Psoas muscle (tissue), 8 donors: ENCODE measurements at regions of chr11 and their contacts with region 1.

Region 1: DNA sequence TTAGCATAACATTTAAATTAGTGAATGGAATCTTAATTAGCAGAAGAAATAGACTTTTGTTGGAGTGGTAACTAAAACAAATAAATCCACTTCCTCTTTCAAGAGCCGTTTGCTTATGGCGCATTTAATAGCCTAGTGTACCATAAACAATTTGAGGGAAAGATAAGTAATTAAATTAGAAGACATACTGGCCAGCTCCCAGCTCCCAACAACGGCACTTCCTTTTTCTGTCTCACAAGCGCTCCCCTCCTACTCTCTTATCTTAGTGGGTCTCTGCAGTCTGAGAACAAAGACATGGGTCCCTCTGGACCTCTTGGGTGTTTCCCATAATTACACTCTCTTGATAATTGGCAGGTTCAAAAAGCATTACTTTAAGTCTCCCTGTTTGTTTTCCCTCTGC is 146.0 kb downstream of the OPCML start:
- DNase-seq: no peak
- ATAC-seq: no peak
- H3K4me3 ChIP-seq: no peak overlapping the region
- H3K27ac ChIP-seq: no peak overlapping the region
- H3K4me1 ChIP-seq: no peaks in the 10 kb centered on the region
- H3K27me3 ChIP-seq: no peaks in the 10 kb centered on the region
- CTCF ChIP-seq: no peak

Region 2: DNA sequence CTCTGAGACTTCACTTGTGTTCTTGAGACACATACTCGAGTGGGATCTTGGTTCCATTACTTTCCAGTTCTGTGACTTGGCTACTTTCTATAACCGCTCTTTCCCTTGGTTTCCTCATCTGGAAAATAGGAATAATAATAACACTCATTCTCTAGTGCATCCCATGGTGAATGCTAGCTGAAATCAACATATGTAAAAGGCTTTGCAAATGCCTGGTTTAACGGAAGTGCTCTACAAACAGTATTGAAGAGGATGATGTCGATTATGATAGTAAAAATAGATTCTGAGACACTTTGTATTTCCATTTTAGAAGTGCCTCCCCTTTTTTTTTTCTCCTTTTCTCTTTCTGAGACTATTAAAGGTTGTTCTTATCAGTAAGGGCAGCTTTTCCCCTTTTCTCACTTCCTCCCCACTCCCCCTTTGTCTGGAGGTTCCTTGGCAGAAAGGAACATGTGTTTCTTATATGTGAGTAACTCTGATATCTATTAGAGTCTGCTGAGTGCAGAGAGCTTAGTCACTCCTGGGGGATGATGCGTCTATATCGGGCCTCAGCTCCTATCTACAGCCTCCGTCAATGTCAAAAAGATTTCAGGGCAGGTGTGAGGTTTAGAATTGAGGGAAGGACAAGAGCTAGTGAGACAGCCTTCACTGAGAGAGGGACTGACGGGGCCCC is 1526.6 kb before region 1 on chr11:
- intact Hi-C with region 1: loop called in 1 of 2 experiments (anchors 10 kb)
- DNase-seq: no peak
- ATAC-seq: no peak
- H3K4me3 ChIP-seq: no peak overlapping the region
- H3K27ac ChIP-seq: no peak overlapping the region
- H3K4me1 ChIP-seq: no peaks in the 10 kb centered on the region
- H3K27me3 ChIP-seq: no peaks in the 10 kb centered on the region
- CTCF ChIP-seq: no peak

Region 3: DNA sequence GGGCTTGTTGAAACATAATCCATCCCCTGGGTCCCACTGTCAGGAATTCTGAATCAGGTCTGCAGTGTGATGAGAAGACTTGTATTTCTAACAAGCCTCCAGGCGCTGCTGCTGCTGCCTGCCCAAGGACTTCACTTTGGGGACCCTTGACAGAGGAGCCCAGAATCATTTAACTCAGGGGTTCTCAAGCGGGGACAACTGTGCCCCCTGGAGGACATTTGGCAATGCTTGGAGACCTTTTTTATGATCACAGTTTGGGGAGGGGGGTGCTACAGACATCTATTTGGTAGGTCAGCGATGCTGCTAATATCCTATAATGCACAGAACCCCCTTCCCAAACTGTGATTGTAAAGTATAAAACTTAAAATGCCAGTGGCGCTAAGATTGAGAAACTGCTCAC is 166.7 kb before region 1 on chr11:
- intact Hi-C with region 1: no loop called
- DNase-seq: no peak
- ATAC-seq: no peak
- H3K4me3 ChIP-seq: no peak overlapping the region
- H3K27ac ChIP-seq: no peak overlapping the region
- H3K4me1 ChIP-seq: no peaks in the 10 kb centered on the region
- H3K27me3 ChIP-seq: peaks cover 0 to 3% (median 0%) of the 10 kb centered on the region in 3 donors
- CTCF ChIP-seq: no peak